OCI-LY7 (cell line): ENCODE measurements at regions of chr1 and their contacts with region 1.

Region 1: DNA sequence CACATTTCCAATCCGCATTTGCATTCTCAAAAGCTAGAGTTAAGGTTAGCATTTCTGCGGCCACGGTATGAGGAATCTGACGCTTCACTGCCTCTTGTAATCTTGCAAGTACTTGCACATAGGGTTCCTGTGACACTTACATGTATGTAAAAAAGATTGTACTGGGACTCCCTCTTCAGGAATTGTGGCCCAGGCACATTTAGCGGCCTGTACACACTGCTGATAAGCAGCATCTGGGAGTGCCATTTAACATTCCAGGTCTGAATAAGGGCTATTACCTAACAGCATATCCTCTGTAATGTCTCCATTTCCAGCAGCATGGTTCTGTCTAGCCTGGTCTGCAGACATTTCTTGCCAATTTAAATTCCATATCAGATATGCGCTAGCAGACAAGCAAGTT is 75.7 kb downstream of the AXDND1 start:
- DNase-seq: peak; percentile 18
- H3K4me3 ChIP-seq: no peak overlapping the region
- H3K27ac ChIP-seq: no peak overlapping the region
- H3K4me1 ChIP-seq: peaks cover 50% of the 10 kb centered on the region
- CTCF ChIP-seq: no peak

Region 2: GRCh38 chr1:178973666-178974101 is 467.8 kb before region 1 on chr1:
- CTCF ChIA-PET with region 1: no interaction called
- POLR2A ChIA-PET with region 1: no interaction called
- intact Hi-C with region 1: no loop called
- DNase-seq: peak; percentile 65
- H3K4me3 ChIP-seq: peak overlapping the region; percentile 34
- H3K27ac ChIP-seq: peak overlapping the region; percentile 68
- H3K4me1 ChIP-seq: peaks cover 29% of the 10 kb centered on the region
- CTCF ChIP-seq: no peak

Region 3: GRCh38 chr1:179353546-179353945 is 88.0 kb before region 1 on chr1:
- CTCF ChIA-PET with region 1: no interaction called
- POLR2A ChIA-PET with region 1: no interaction called
- intact Hi-C with region 1: no loop called
- DNase-seq: no peak
- H3K4me3 ChIP-seq: no peak overlapping the region
- H3K27ac ChIP-seq: no peak overlapping the region
- H3K4me1 ChIP-seq: no peaks in the 10 kb centered on the region
- CTCF ChIP-seq: no peak

Region 4: GRCh38 chr1:179372166-179372565 is 69.3 kb before region 1 on chr1:
- CTCF ChIA-PET with region 1: no interaction called
- POLR2A ChIA-PET with region 1: no interaction called
- intact Hi-C with region 1: no loop called
- DNase-seq: no peak
- H3K4me3 ChIP-seq: no peak overlapping the region
- H3K27ac ChIP-seq: no peak overlapping the region
- H3K4me1 ChIP-seq: no peaks in the 10 kb centered on the region
- CTCF ChIP-seq: no peak

Region 5: DNA sequence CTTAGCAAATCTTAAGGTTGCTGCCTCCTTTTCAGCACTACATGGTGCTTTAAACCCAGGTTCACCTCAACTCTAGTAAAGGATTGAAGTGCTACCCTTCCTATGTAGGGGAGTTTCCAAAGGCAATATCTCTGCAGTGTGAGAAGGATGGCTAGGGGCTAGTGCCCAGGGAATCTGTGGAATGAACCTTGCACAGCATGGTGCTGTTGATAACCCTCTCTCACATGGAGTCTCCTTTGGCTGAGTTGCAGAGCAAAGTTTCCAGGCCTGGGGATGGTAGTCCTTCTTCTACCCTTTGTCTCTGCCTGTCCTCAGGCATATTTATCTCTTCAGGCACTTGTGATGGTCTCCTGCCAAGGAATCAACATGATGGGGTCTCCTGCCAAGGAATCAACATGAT is 16.3 kb before region 1 on chr1:
- CTCF ChIA-PET with region 1: no interaction called
- POLR2A ChIA-PET with region 1: interaction called, 10 read pairs
- intact Hi-C with region 1: no loop called
- DNase-seq: no peak
- H3K4me3 ChIP-seq: no peak overlapping the region
- H3K27ac ChIP-seq: no peak overlapping the region
- H3K4me1 ChIP-seq: no peaks in the 10 kb centered on the region
- CTCF ChIP-seq: no peak

Region 6: GRCh38 chr1:179575497-179576314 is 134.2 kb after region 1 on chr1 and contains the start of gene NPHS2:
- CTCF ChIA-PET with region 1: no interaction called
- POLR2A ChIA-PET with region 1: no interaction called
- intact Hi-C with region 1: no loop called
- DNase-seq: no peak
- H3K4me3 ChIP-seq: no peak within 1 kb of the TSS
- H3K27ac ChIP-seq: no peak within 1 kb of the TSS
- H3K4me1 ChIP-seq: no peaks in the 10 kb centered on the region
- CTCF ChIP-seq: no peak
- total RNA-seq, gene NPHS2: not detected in 2 replicates

Region 7: GRCh38 chr1:179599623-179600249 is 158.2 kb after region 1 on chr1:
- CTCF ChIA-PET with region 1: no interaction called
- POLR2A ChIA-PET with region 1: no interaction called
- intact Hi-C with region 1: loop called (anchors 2 kb)
- DNase-seq: peak; percentile 85
- H3K4me3 ChIP-seq: no peak overlapping the region
- H3K27ac ChIP-seq: no peak overlapping the region
- H3K4me1 ChIP-seq: peaks cover 44% of the 10 kb centered on the region
- CTCF ChIP-seq: peak; percentile 95